ENCODE measurements at regions of chr4 and their contacts with region 1.

Region 1: DNA sequence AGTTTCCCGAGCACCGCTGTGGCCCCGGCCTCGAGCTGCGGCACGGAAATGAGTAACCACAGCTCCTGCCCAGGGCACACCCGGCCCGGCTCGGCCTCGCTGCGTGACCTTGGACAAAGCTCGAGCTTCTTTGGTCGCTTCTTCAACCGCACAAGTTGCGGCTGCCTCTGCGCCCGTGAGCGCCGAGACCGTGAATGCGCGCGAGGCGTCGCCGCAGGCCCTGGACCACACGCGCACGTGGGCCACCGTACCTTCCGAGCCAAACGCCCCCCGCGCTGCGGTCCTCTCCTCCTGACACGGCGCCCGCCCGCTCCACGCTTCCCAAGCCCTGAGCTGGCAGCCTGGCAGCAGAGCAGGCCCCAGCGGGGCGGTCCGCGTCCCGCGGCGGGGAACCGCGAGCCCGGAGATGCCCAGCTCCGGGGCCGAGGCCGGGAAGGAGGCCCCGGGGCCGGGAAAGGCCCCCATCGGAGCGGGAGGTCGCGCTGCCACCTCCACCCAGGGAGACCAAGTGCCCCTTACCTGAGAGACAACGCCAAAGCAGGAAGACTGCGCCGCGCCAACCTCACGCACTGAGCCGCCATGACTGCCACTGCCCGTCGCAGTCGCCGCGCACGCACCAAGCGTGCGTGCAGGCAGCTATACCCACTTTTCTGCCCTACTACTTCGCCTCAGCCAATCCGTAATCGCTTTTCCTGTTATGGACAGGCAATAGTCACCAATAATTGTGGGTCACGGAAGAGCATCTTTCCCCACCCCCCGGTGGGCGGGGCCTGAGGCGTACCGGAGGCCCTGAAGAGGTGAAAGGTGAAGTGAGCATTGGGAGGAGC is at the start of gene GRPEL1:
- DNase-seq: peak; percentile 37 to 100 (median 100)
- ATAC-seq: peak; percentile 91 to 92
- H3K4me3 Mint-ChIP-seq: peak within 1 kb of the TSS; percentile 85 to 98 (median 96)
- H3K27ac Mint-ChIP-seq: peak within 1 kb of the TSS; percentile 91 to 98 (median 96)
- H3K4me1 Mint-ChIP-seq: peaks cover 18 to 59% (median 52%) of the 10 kb centered on the region in 4 donors
- H3K27me3 Mint-ChIP-seq: peaks cover 0 to 3% (median 0%) of the 10 kb centered on the region in 5 donors
- polyA plus RNA-seq, gene GRPEL1: 31.4 to 47.6 (median 36.3) TPM

Region 2: DNA sequence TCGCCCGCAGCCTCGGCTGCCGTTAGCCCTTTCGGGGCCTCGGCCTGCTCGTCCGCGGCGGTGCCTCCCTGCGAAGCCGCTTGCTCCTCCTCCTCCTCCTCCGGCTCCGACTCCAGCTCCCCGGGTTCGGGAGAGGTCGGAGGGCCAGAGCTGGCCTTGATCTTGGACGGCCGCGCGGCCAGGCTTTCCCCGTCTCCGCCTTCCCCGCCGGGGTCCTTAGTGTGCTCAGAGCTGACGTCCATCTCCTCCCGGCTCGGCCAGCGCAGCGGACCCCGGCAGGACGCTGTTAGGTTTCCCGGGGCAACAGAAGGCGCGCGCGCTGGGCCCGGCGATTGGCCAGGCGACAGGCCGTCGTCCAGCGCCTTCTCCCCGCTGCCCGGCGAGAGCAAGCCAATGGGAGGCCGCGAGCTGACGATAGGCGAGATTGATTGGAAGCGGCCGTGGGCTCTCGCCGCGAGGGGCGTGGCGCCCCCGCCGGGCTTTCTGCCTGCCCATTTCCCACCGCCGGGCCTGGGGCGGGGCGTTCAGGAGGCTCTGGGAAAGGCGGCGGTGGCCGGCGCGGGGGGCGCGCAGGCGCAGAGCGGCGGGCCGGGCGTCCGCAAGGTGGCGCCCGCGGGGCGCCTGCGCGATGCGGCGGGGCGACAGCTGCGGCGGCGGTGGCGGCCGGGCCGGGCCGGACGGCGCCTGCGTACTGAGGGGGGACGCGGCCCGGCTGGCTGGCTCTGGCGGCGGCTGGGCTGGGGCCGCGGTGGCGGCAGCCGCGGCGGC is 24.8 kb before region 1 on chr4 and contains the start of gene TADA2B:
- POLR2A ChIA-PET with region 1: interaction called, 172 read pairs
- DNase-seq: peak; percentile 77 to 94 (median 88)
- ATAC-seq: peak; percentile 73 to 78
- H3K4me3 Mint-ChIP-seq: peak within 1 kb of the TSS; percentile 87 to 95 (median 92)
- H3K27ac Mint-ChIP-seq: peak within 1 kb of the TSS; percentile 72 to 94 (median 90)
- H3K4me1 Mint-ChIP-seq: peaks cover 35 to 55% (median 47%) of the 10 kb centered on the region in 4 donors
- H3K27me3 Mint-ChIP-seq: no peaks in the 10 kb centered on the region
- polyA plus RNA-seq, gene TADA2B: 2.6 to 4.8 (median 4.5) TPM

Region 3: DNA sequence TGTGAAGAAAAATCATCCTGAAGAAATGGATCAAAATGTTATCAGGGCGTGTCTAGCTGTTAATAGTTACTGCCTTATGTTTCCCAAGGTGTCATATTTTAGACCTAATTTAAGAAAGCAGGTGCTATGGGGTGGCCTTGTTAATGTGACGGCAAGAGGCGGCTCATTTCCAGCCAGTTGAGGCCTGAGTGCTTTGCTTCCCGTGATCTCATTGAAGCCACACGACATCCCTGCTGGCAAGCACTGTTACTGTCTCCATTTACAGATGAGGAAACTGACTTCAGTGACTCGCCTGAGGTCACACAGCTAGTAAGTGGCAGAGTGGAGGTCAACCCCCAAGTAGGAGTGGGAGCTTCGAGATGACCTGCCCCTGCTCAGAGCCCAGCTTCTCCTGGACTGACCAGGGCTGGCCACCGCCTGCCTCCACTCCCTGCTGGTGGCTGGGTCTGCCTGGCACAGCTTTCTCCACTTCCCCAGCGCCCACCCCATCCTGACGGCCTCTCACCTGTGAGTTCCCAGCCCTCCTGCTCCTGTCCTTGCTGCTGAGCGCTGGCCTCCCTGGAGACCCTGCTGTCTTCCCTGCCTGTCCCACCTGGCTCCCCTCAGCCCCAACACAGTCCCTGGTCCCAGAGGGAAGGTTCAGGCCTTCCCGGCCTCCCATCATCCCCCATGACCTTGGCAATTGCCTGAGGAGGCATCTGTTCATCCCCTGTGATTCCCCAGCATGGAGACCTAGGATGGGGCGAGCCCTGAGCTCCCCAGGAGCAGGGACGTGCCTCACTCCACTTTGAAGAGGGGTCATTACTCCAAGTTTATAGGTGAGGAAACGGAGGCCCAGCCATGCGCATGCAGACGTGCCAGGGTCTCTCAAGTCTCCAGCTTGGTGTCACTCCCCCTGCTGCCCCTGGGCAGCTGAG is 77.0 kb after region 1 on chr4:
- POLR2A ChIA-PET with region 1: no interaction called
- DNase-seq: no peak
- ATAC-seq: no peak
- H3K4me3 Mint-ChIP-seq: no peak overlapping the region
- H3K27ac Mint-ChIP-seq: no peak overlapping the region
- H3K4me1 Mint-ChIP-seq: no peaks in the 10 kb centered on the region
- H3K27me3 Mint-ChIP-seq: peaks cover 2 to 32% (median 10%) of the 10 kb centered on the region in 5 donors

Region 4: GRCh38 chr4:7167706-7168105 is 100.0 kb after region 1 on chr4:
- POLR2A ChIA-PET with region 1: no interaction called
- DNase-seq: no peak
- ATAC-seq: no peak
- H3K4me3 Mint-ChIP-seq: no peak overlapping the region
- H3K27ac Mint-ChIP-seq: no peak overlapping the region
- H3K4me1 Mint-ChIP-seq: peaks cover 4 to 10% (median 6%) of the 10 kb centered on the region in 4 donors
- H3K27me3 Mint-ChIP-seq: peaks cover 0 to 15% (median 2%) of the 10 kb centered on the region in 5 donors

Region 5: DNA sequence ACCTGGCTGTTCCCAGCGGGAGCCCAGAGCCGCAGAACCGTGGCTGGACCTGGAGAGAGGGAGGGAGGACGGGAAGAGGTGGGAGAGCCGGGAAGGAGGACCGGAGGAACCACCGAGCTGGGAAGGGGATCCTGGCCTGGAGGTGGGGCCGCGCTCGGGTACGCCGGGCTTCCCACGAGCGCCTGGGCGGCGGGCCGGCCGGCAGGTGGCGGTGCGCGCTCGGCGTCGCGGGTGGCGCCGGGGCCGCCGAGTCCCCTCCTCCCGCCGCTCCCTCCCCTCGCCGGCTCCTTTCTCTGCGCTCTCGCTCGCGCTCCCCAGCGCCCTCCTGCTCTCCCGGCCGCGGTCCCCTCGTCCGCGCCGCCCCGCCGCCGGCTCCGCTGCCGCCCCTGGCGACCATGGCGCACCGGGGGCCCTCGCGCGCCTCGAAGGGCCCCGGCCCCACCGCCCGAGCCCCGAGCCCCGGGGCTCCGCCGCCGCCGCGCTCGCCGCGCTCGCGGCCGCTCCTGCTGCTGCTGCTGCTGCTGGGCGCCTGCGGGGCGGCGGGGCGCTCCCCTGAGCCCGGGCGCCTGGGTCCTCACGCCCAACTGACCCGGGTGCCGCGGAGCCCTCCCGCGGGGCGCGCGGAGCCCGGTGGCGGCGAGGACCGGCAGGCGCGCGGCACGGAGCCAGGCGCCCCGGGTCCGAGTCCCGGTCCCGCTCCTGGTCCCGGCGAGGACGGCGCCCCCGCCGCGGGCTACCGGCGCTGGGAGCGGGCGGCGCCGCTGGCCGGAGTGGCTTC is 124.8 kb after region 1 on chr4 and contains the start of gene SORCS2:
- POLR2A ChIA-PET with region 1: no interaction called
- DNase-seq: peak in 6 of 10 donors; percentile 11 to 37 (median 26)
- ATAC-seq: peak; percentile 50 to 63
- H3K4me3 Mint-ChIP-seq: peak within 1 kb of the TSS in 8 of 10 donors; percentile 22 to 78 (median 54)
- H3K27ac Mint-ChIP-seq: no peak within 1 kb of the TSS
- H3K4me1 Mint-ChIP-seq: peaks cover 0 to 2% (median under 1%) of the 10 kb centered on the region in 4 donors
- H3K27me3 Mint-ChIP-seq: peaks cover 26 to 85% (median 52%) of the 10 kb centered on the region in 5 donors
- polyA plus RNA-seq, gene SORCS2: not detected

Region 6: GRCh38 chr4:7365462-7366179 is 298.0 kb after region 1 on chr4:
- POLR2A ChIA-PET with region 1: no interaction called
- DNase-seq: no peak
- ATAC-seq: no peak
- H3K4me3 Mint-ChIP-seq: no peak overlapping the region
- H3K27ac Mint-ChIP-seq: no peak overlapping the region
- H3K4me1 Mint-ChIP-seq: no peaks in the 10 kb centered on the region
- H3K27me3 Mint-ChIP-seq: peaks cover 0 to 16% (median 10%) of the 10 kb centered on the region in 5 donors

Measured in naive thymus-derived CD8-positive, alpha-beta T cell (primary cell).